Activated CD4-positive, alpha-beta T cell treated with anti-CD3 and anti-CD28 coated beads, Interleukin-2, amount 10 ng/mL, durations not matched to agents 24 days and 14 days (primary cell): ENCODE measurements at regions of chr17 and their contacts with region 1.

Region 1: DNA sequence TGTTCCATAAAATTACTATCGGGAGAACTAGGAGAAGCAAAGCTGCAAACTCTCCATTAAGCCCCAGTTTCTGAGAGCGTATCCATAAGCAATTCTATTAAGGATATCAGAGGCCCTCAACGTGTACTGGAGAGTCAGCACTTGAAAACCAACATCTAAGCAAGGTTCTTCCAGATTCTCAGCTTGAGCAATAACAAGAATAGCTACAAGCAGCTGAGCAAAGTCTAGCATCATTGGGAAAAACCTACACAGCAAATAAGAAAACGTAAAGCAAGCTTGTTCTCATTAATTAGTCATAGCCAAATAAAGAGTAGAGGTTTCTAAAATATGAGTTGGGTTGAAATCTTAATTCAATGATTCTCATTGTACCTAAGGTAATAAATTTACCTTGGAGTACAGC is 26.9 kb upstream of the COX10 start:
- DNase-seq: no peak
- H3K4me3 Mint-ChIP-seq: no peak overlapping the region
- H3K27ac Mint-ChIP-seq: peak overlapping the region; percentile 59
- H3K4me1 Mint-ChIP-seq: peaks cover 51% of the 10 kb centered on the region
- H3K27me3 Mint-ChIP-seq: no peaks in the 10 kb centered on the region

Region 2: GRCh38 chr17:13940858-13941665 is 101.3 kb before region 1 on chr17:
- intact Hi-C with region 1: no loop called
- DNase-seq: no peak
- H3K4me3 Mint-ChIP-seq: no peak overlapping the region
- H3K27ac Mint-ChIP-seq: no peak overlapping the region
- H3K4me1 Mint-ChIP-seq: no peaks in the 10 kb centered on the region
- H3K27me3 Mint-ChIP-seq: no peaks in the 10 kb centered on the region

Region 3: GRCh38 chr17:14014657-14015056 is 27.8 kb before region 1 on chr17:
- intact Hi-C with region 1: no loop called
- DNase-seq: no peak
- H3K4me3 Mint-ChIP-seq: no peak overlapping the region
- H3K27ac Mint-ChIP-seq: no peak overlapping the region
- H3K4me1 Mint-ChIP-seq: peaks cover 12% of the 10 kb centered on the region
- H3K27me3 Mint-ChIP-seq: no peaks in the 10 kb centered on the region

Region 4: GRCh38 chr17:14203388-14203787 is 161.0 kb after region 1 on chr17:
- intact Hi-C with region 1: loop called (anchors 2 kb)
- DNase-seq: peak; percentile 82
- H3K4me3 Mint-ChIP-seq: peak overlapping the region; percentile 52
- H3K27ac Mint-ChIP-seq: peak overlapping the region; percentile 81
- H3K4me1 Mint-ChIP-seq: peaks cover 76% of the 10 kb centered on the region
- H3K27me3 Mint-ChIP-seq: no peaks in the 10 kb centered on the region

Region 5: DNA sequence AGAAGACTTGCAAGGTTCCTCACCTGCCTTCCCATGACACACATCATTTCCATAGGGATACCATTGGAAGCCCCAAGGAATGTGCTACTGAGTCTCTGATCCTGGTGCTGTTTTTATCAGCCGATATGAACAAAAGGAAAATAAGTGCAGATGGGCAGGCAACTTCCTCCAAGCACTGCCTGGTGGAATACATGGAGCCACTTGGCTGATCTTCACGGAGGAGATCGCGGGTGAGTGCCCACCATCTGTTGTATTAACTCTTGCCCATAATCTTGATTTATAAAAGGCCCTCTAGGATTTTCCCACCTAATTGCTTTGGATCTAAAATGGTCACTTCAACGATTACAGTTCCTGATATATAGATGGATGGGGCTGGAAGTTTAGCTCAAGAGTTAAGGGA is 219.0 kb after region 1 on chr17:
- intact Hi-C with region 1: no loop called
- DNase-seq: peak; percentile 46
- H3K4me3 Mint-ChIP-seq: no peak overlapping the region
- H3K27ac Mint-ChIP-seq: no peak overlapping the region
- H3K4me1 Mint-ChIP-seq: no peaks in the 10 kb centered on the region
- H3K27me3 Mint-ChIP-seq: no peaks in the 10 kb centered on the region